ENCODE measurements at regions of chr10 and their contacts with region 1.

Region 1: DNA sequence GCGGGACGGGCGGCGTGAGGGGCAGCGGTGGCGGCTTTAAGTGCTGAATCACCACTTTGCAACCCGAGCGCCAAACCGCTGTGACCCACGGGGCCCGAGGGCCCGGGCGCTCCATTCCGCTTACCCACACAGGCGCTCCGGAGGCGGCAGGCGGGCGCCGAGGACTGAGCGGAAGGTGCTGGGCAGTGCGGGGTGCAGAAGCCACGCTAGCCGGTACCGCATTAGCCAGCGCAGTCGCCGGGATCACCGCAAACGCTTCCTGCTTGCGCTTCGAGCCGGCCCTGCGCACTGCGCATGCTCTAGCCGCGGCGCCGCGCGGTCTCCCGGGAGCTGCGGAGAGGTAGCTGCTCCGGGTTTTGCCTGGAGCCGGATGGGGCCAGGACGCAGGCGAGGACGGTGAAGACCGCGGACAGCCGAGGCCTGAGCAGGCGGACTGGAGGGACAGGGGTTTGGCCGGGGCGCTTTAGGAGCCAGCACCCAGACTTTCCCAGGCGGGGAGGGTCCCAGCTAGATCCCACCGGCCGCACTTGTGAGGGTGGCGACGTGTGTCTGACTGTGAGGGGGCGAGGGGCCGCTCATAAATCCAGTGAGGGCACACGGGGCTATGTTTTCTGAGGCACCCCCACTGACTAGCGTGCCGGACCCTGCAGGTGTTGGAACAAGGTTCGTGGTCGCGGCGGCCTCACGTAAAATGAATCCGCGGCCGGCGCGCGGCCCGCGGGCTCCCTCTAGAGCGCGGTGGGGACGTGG is at the start of gene IDE:
- DNase-seq: peak; percentile 88
- H3K4me3 Mint-ChIP-seq: peak within 1 kb of the TSS; percentile 81
- H3K27ac Mint-ChIP-seq: peak within 1 kb of the TSS; percentile 89
- H3K4me1 Mint-ChIP-seq: peaks cover 34% of the 10 kb centered on the region
- H3K27me3 Mint-ChIP-seq: no peaks in the 10 kb centered on the region

Region 2: GRCh38 chr10:92517034-92517655 is 56.8 kb before region 1 on chr10:
- CTCF ChIA-PET with region 1: interaction called, 98 read pairs
- DNase-seq: peak; percentile 75
- H3K4me3 Mint-ChIP-seq: no peak overlapping the region
- H3K27ac Mint-ChIP-seq: peak overlapping the region; percentile 45
- H3K4me1 Mint-ChIP-seq: peaks cover 7% of the 10 kb centered on the region
- H3K27me3 Mint-ChIP-seq: no peaks in the 10 kb centered on the region

Region 3: GRCh38 chr10:92592761-92593618 is 19.0 kb after region 1 on chr10 and contains the start of gene KIF11:
- CTCF ChIA-PET with region 1: interaction called, 20 read pairs
- DNase-seq: peak; percentile 99
- H3K4me3 Mint-ChIP-seq: peak within 1 kb of the TSS; percentile 96
- H3K27ac Mint-ChIP-seq: peak within 1 kb of the TSS; percentile 100
- H3K4me1 Mint-ChIP-seq: peaks cover 59% of the 10 kb centered on the region
- H3K27me3 Mint-ChIP-seq: no peaks in the 10 kb centered on the region

Region 4: DNA sequence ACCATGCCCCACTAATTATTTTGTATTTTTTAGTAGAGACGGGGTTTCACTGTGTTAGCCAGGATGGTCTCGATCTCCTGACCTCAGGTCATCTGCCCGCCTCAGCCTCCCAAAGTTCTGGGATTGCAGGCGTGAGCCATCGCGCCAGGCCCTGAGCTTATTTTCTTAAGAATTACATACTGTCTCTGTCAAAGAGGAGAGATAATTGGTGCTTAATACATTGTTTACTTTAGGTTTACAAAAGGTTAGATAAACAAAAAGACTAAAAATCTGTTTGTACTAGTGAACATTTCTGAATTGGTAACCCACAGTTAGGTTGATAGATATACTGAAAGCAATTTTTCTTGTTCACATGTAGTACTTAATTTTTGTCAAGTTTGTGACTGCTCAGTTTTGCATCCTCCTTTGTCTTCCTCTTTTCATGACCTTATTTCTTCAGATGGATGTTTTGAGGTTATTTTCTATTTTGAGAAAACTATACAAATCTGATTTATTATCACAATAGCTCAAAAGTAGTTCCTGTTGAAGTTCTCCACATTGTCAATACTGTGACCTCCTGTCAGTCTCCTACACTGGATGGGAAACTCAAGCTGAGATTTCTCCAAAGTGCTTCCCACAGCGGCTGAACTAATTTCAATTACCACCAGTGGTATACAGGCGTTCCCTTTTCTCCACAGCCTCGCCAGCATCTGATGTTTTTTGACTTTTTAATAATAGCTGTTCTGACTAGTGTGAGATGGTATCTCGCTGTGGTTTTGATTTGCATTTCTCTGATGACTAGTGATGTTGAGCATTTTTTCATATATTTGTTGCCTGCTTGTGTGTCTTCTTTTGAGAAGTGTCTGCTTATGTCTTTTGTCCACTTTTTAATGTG is 138.3 kb after region 1 on chr10:
- CTCF ChIA-PET with region 1: no interaction called
- DNase-seq: no peak
- H3K4me3 Mint-ChIP-seq: no peak overlapping the region
- H3K27ac Mint-ChIP-seq: no peak overlapping the region
- H3K4me1 Mint-ChIP-seq: no peaks in the 10 kb centered on the region
- H3K27me3 Mint-ChIP-seq: peaks cover 46% of the 10 kb centered on the region